OCI-LY7 (cell line): ENCODE measurements at regions of chr6 and their contacts with region 1.

Region 1: DNA sequence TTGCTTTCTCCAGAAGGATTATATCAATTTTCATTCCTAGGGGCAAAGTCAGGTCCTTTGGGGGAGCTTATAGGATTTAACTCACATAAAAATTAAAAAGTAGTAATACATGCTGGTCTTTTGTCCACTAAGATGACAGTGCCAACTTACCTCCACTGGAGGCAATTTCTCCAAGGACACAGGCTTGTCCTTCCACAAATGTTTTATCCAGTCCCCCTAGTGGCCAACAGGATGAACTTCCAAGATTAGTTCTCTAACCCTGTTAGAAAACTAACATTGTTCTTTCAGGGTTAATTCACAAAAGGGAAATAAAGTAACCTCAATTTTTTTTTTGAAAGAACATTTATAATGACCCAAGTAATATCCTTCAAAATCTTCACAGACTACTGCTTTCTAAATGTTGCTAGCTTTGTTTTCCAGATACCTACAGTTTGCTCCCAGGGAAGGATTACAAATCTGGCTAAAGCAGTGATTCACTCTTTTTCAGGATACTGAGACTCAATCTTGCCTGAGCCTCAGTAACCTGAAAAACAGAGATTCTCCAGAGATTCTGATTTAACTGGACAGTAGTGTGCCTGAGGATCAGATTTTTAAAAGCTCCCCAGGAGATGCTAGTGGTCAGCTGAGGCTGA is 31.7 kb upstream of the UBR2 start:
- DNase-seq: peak; percentile 75
- H3K4me3 ChIP-seq: no peak overlapping the region
- H3K27ac ChIP-seq: no peak overlapping the region
- H3K4me1 ChIP-seq: no peaks in the 10 kb centered on the region
- CTCF ChIP-seq: peak; percentile 98

Region 2: GRCh38 chr6:42260972-42261371 is 271.2 kb before region 1 on chr6:
- CTCF ChIA-PET with region 1: no interaction called
- POLR2A ChIA-PET with region 1: no interaction called
- intact Hi-C with region 1: loop called (anchors 5 kb)
- DNase-seq: peak; percentile 58
- H3K4me3 ChIP-seq: peak overlapping the region; percentile 42
- H3K27ac ChIP-seq: no peak overlapping the region
- H3K4me1 ChIP-seq: peaks cover 8% of the 10 kb centered on the region
- CTCF ChIP-seq: peak; percentile 77

Region 3: DNA sequence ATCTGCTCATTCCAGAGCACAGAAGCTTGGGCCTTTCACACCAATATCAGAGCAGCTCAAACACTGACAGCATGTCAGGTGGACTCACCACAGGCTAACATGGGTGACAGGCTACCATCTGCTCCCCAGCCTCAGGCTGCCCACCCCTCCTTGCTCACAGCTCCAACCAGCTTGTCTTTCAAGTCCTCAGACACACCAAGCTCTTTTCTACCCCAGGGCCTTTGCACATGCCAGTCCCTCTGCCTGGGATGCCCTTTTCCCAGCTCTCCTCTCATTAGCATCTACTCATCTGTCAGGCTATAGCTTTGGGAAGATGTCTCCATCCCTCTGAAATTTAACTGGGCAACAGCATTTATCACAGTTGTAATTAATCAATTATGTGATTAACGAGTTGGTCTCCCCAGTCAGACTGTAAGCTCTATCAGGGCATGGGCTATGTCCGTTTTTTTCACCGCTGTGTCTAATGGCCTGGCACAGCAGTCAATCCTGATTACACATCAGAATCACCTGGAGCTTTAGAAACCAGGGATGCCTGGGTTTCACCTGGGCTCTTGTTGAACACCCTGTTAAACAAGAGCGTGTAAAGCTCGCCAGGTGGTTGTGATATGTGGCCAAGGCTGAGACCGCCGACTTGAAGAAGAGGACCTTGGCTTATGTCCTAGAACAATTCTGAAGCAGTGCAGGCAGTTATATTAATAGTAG is 225.6 kb before region 1 on chr6:
- CTCF ChIA-PET with region 1: no interaction called
- POLR2A ChIA-PET with region 1: no interaction called
- intact Hi-C with region 1: loop called (anchors 5 kb)
- DNase-seq: no peak
- H3K4me3 ChIP-seq: no peak overlapping the region
- H3K27ac ChIP-seq: no peak overlapping the region
- H3K4me1 ChIP-seq: no peaks in the 10 kb centered on the region
- CTCF ChIP-seq: no peak

Region 4: DNA sequence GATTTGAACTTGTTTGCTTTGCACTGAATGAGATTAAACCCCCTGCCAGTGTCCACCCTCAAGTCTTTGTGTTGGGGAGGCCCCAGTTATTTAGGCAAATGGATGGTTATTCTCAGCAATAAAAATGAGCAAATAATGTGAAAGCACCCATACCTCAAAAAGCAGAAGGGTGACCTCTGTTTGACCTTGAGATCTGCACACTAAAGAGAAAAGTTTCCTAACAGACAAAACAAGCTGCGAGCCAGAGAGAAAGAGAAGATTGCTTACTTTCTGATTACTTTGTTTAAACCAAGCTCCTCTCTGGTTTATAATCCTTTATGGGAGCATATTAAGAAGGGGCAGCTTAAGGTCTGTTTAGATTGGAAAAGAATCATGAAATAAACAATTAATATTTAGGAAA is 50.0 kb before region 1 on chr6:
- CTCF ChIA-PET with region 1: no interaction called
- POLR2A ChIA-PET with region 1: no interaction called
- intact Hi-C with region 1: loop called (anchors 1 kb)
- DNase-seq: no peak
- H3K4me3 ChIP-seq: no peak overlapping the region
- H3K27ac ChIP-seq: no peak overlapping the region
- H3K4me1 ChIP-seq: no peaks in the 10 kb centered on the region
- CTCF ChIP-seq: no peak